Right ventricle myocardium inferior (tissue), 1 donor: ENCODE measurements at regions of chr14 and their contacts with region 1.

Region 1: GRCh38 chr14:34539407-34540180 is at the start of gene EAPP:
- DNase-seq: peak; percentile 100
- ATAC-seq: peak; percentile 99
- total RNA-seq, gene EAPP: 16.7 TPM

Region 2: GRCh38 chr14:34461334-34462131 is 78.1 kb before region 1 on chr14:
- intact Hi-C with region 1: loop called (anchors 5 kb)
- DNase-seq: peak; percentile 80
- ATAC-seq: peak; percentile 26

Region 3: GRCh38 chr14:34682787-34683321 is 143.3 kb after region 1 on chr14:
- intact Hi-C with region 1: no loop called
- DNase-seq: no peak
- ATAC-seq: no peak

Region 4: DNA sequence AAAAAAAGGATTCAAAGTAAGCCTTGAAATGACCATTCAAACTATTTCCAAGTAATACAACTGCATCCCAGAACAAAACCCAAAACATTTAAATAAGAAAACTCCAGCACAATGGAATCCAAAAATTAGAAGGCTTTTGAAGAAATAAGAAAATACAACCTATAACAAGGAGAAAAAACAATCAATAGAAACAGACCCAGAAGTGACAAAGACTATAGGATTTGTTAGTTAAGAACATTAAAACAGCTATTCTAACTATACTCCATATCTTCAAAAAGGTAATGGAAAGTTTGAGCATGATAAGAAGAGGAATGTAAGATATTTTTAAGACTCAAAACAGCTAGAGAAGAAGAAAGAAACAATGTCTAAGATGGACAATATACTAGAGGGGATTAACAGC is 403.9 kb after region 1 on chr14:
- intact Hi-C with region 1: no loop called
- DNase-seq: no peak
- ATAC-seq: no peak